Heart left ventricle (tissue), 16 donors: ENCODE measurements at regions of chr6 and their contacts with region 1.

Region 1: DNA sequence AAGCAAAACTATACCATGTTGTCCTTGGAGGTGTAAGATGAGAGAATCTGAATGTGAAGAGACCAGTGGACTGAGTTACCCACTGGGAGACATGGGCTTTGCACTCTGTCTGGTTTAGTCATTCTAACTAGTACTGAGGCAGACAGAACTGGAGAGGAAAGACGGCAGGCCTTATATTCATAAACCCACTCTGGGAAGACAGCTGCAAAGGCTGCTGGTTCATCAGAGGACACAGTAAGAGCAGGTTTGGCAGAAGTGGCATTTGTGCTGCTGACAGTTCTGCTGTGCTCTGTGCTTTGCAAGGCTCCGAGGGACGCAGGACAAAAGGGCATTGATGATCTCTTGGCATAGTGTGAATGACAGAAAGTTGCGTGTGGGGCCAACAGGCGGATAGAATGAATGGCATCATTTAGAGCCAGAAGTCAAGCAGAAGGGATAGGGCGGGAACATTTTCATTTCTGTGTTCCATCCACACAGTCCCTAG is 142.3 kb upstream of the TENT5A start:
- DNase-seq: peak; percentile 59 to 86 (median 70)
- ATAC-seq: peak; percentile 91 to 97 (median 92)
- H3K4me3 ChIP-seq: peak overlapping the region in 7 of 12 donors; percentile 9 to 44 (median 22)
- H3K27ac ChIP-seq: peak overlapping the region; percentile 50 to 87 (median 80)
- H3K4me1 ChIP-seq: peaks cover 0 to 55% (median 13%) of the 10 kb centered on the region in 12 donors
- H3K27me3 ChIP-seq: no peaks in the 10 kb centered on the region
- CTCF ChIP-seq: no peak
- POLR2A ChIP-seq: no peak

Region 2: DNA sequence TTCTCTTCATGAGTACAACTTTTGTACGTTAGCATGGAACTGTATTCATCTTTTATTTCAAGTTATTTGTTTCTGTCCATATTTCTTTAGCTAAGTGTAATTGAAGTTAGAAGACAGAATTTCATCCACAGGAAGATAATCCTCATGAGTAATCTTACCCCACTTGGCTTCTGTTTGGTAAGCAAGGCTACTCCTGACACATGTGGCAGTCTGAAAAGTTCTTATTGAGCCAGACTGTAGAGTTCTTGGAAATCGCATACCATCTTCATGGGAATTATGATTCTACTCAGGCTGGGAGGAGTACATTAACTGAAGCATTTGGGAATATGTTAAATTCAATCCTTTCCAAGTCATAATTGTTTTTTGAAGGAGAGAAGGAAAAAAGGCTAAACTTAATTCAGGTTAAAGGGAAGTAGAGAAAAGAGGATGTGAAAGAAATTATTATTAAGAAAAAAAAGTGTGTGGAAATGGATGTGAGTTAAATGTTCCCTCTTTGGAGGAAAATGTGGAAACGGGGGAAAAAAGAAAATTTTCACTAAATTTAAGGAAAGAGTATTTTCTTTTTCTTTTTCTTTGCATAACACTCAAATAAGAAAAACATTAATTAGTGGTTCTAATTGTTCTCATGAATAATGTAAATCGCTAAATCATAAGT is 100.9 kb before region 1 on chr6:
- intact Hi-C with region 1: no loop called
- DNase-seq: no peak
- ATAC-seq: no peak
- H3K4me3 ChIP-seq: no peak overlapping the region
- H3K27ac ChIP-seq: no peak overlapping the region
- H3K4me1 ChIP-seq: peaks cover 0 to 16% (median 0%) of the 10 kb centered on the region in 12 donors
- H3K27me3 ChIP-seq: no peaks in the 10 kb centered on the region
- CTCF ChIP-seq: no peak
- POLR2A ChIP-seq: no peak

Region 3: DNA sequence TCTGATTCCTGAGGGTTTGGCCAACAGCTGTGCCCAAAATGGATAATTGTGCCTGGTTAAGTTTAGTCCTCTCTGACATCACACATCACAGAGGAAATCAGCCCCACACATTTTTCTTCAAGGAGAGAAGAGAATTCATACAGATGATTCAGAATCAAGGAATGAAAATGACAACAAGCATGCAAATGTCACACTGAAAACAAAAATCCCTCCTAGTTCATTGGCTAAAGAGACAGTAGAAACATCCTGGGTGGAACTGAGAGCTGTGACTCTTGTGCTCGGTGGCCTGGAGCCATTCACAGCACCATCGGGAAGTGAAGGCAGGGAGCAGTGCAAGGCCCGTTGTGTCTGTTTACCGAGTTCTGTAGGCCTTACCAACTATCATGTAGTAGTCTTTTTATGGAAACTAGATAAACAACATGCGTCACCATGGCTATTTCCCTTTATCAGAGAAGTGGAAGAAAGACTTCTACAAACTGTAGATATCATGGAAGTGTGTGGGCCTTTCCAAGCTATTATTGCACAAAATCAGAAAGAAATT is 60.6 kb before region 1 on chr6:
- intact Hi-C with region 1: loop called in 3 of 10 experiments (anchors 5 to 10 kb)
- DNase-seq: peak; percentile 55 to 89 (median 66)
- ATAC-seq: peak; percentile 98 to 99 (median 99)
- H3K4me3 ChIP-seq: no peak overlapping the region
- H3K27ac ChIP-seq: peak overlapping the region; percentile 56 to 82 (median 74)
- H3K4me1 ChIP-seq: peaks cover 0 to 21% (median 16%) of the 10 kb centered on the region in 12 donors
- H3K27me3 ChIP-seq: no peaks in the 10 kb centered on the region
- CTCF ChIP-seq: peak in 4 of 12 donors; percentile 5 to 26 (median 10)
- POLR2A ChIP-seq: no peak

Region 4: DNA sequence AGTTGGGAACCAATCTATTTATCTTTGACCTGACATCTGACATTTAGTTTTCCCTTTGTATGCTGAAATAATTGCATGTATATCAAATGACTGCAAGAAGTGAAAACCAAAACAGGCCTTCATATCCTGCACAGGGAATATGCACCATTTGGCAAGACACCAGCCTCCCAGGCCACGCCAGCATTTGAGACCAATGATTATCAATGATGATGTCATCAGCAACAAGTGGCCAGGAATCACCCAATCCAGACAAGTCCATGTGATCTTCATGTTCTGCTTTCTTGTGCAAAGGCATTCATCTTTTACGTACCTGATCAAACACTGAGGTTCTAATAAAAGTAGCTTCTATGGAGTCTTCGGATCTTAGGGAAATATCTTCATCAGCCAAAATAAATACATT is 34.9 kb before region 1 on chr6:
- intact Hi-C with region 1: loop called in 1 of 10 experiments (anchors 5 kb)
- DNase-seq: peak; percentile 28 to 60 (median 49)
- ATAC-seq: peak in 3 of 4 donors; percentile 23 to 40 (median 36)
- H3K4me3 ChIP-seq: peak overlapping the region in 1 of 12 donors; percentile 12
- H3K27ac ChIP-seq: peak overlapping the region in 8 of 12 donors; percentile 6 to 76 (median 46)
- H3K4me1 ChIP-seq: peaks cover 0 to 40% (median 15%) of the 10 kb centered on the region in 12 donors
- H3K27me3 ChIP-seq: no peaks in the 10 kb centered on the region
- CTCF ChIP-seq: no peak
- POLR2A ChIP-seq: no peak